AG04450 (cell line): ENCODE measurements at regions of chr14 and their contacts with region 1.

Region 1: GRCh38 chr14:96001866-96002497 is 37.2 kb upstream of the C14orf132 start:
- DNase-seq: no peak
- H3K4me3 ChIP-seq: no peak overlapping the region
- H3K27ac ChIP-seq: no peak overlapping the region
- H3K27me3 ChIP-seq: peaks cover 9% of the 10 kb centered on the region
- CTCF ChIP-seq: no peak

Region 2: GRCh38 chr14:95307402-95308062 is 694.5 kb before region 1 on chr14:
- CTCF ChIA-PET with region 1: no interaction called
- POLR2A ChIA-PET with region 1: no interaction called
- DNase-seq: no peak
- H3K4me3 ChIP-seq: no peak overlapping the region
- H3K27ac ChIP-seq: no peak overlapping the region
- H3K27me3 ChIP-seq: no peaks in the 10 kb centered on the region
- CTCF ChIP-seq: no peak

Region 3: GRCh38 chr14:96017882-96018281 is 15.9 kb after region 1 on chr14:
- CTCF ChIA-PET with region 1: no interaction called
- POLR2A ChIA-PET with region 1: no interaction called
- DNase-seq: no peak
- H3K4me3 ChIP-seq: no peak overlapping the region
- H3K27ac ChIP-seq: no peak overlapping the region
- H3K27me3 ChIP-seq: peaks cover 33% of the 10 kb centered on the region
- CTCF ChIP-seq: no peak

Region 4: GRCh38 chr14:96038920-96039632 is 37.1 kb after region 1 on chr14 and contains the start of gene C14orf132:
- CTCF ChIA-PET with region 1: interaction called, 12 read pairs
- POLR2A ChIA-PET with region 1: no interaction called
- DNase-seq: no peak
- H3K4me3 ChIP-seq: peak within 1 kb of the TSS; percentile 89
- H3K27ac ChIP-seq: peak within 1 kb of the TSS; percentile 13
- H3K27me3 ChIP-seq: no peaks in the 10 kb centered on the region
- CTCF ChIP-seq: no peak
- polyA plus RNA-seq, gene C14orf132: 42.0 and 47.7 TPM in 2 replicates